ENCODE measurements at regions of chr7 and their contacts with region 1.

Region 1: DNA sequence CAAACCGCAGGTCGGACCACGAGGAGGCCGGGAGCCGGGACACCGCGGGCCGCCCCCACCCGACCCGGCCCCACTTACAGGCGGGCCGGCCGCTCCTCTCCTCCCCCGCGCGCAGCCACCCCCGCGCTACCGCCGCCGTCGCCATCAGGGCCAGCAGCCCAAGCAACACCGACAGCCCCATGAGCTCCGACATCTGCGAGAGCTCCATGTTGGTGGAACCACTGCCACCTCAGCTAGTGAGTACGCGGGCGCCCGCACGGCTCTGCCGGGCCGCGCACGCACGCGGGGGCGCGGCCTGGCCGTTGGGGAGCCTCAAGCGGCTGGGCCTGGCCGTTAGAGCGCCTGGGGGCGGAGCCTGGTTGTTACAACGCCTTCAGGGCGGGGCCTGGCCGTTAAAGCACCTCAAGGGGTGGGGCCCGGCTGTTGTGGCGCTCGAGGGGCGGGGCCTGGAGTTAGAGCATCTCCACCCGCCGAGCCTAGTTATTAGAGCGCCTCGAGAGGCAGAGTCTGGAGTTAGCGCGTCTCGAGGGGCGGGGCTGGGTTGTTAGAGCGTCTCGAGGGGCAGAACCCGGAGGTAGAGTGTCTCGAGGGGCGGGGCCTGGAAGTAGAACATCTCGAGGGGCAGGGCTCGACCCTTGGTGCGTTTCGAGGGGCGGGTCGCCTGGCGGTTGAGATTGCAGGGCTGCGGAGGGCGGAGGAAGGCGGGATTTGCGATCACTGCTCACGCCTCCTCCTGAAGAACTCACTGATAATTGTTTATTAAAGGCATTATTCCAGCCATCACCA is at the start of gene TBL2:
- DNase-seq: peak; percentile 99
- ATAC-seq: peak; percentile 88
- H3K4me3 ChIP-seq: peak within 1 kb of the TSS; percentile 61 to 90 (median 81)
- H3K4me3 Mint-ChIP-seq: peak within 1 kb of the TSS; percentile 94
- H3K27ac ChIP-seq: peak within 1 kb of the TSS; percentile 90 to 93
- H3K27ac Mint-ChIP-seq: peak within 1 kb of the TSS; percentile 94
- H3K4me1 ChIP-seq: peaks cover 11 to 21% of the 10 kb centered on the region in 2 donors
- H3K4me1 Mint-ChIP-seq: peaks cover 20% of the 10 kb centered on the region
- H3K27me3 ChIP-seq: no peaks in the 10 kb centered on the region
- H3K27me3 Mint-ChIP-seq: no peaks in the 10 kb centered on the region
- CTCF ChIP-seq: no peak
- total RNA-seq, gene TBL2: 34.6 and 34.7 TPM in 2 replicates

Region 2: DNA sequence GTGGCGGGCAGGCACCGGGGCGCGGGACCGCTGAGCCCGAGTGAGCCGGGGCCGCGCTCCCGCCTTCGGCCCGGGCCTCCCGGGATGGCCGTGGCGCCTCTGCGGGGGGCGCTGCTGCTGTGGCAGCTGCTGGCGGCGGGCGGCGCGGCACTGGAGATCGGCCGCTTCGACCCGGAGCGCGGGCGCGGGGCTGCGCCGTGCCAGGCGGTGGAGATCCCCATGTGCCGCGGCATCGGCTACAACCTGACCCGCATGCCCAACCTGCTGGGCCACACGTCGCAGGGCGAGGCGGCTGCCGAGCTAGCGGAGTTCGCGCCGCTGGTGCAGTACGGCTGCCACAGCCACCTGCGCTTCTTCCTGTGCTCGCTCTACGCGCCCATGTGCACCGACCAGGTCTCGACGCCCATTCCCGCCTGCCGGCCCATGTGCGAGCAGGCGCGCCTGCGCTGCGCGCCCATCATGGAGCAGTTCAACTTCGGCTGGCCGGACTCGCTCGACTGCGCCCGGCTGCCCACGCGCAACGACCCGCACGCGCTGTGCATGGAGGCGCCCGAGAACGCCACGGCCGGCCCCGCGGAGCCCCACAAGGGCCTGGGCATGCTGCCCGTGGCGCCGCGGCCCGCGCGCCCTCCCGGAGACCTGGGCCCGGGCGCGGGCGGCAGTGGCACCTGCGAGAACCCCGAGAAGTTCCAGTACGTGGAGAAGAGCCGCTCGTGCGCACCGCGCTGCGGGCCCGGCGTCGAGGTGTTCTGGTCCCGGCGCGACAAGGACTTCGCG is 144.4 kb before region 1 on chr7:
- CTCF ChIA-PET with region 1: no interaction called
- POLR2A ChIA-PET with region 1: no interaction called
- intact Hi-C with region 1: loop called (anchors 1 kb)
- DNase-seq: no peak
- ATAC-seq: peak; percentile 46
- H3K4me3 ChIP-seq: peak overlapping the region in 4 of 5 experiments; percentile 17 to 53 (median 43)
- H3K4me3 Mint-ChIP-seq: peak overlapping the region; percentile 80
- H3K27ac ChIP-seq: no peak overlapping the region
- H3K27ac Mint-ChIP-seq: no peak overlapping the region
- H3K4me1 ChIP-seq: peaks cover 0 to 9% of the 10 kb centered on the region in 2 donors
- H3K4me1 Mint-ChIP-seq: peaks cover 8% of the 10 kb centered on the region
- H3K27me3 ChIP-seq: peaks cover 0 to 5% (median 0%) of the 10 kb centered on the region in 4 experiments
- H3K27me3 Mint-ChIP-seq: peaks cover 5% of the 10 kb centered on the region
- CTCF ChIP-seq: no peak

Region 3: GRCh38 chr7:73522105-73522872 is 56.2 kb before region 1 on chr7 and contains the start of gene BAZ1B:
- CTCF ChIA-PET with region 1: interaction called, 4 read pairs
- POLR2A ChIA-PET with region 1: interaction called, 10 read pairs
- intact Hi-C with region 1: loop called (anchors 1 kb)
- DNase-seq: peak; percentile 98
- ATAC-seq: peak; percentile 91
- H3K4me3 ChIP-seq: peak within 1 kb of the TSS; percentile 50 to 78 (median 68)
- H3K4me3 Mint-ChIP-seq: peak within 1 kb of the TSS; percentile 95
- H3K27ac ChIP-seq: peak within 1 kb of the TSS; percentile 82 to 87
- H3K27ac Mint-ChIP-seq: peak within 1 kb of the TSS; percentile 98
- H3K4me1 ChIP-seq: peaks cover 58 to 63% of the 10 kb centered on the region in 2 donors
- H3K4me1 Mint-ChIP-seq: peaks cover 60% of the 10 kb centered on the region
- H3K27me3 ChIP-seq: no peaks in the 10 kb centered on the region
- H3K27me3 Mint-ChIP-seq: no peaks in the 10 kb centered on the region
- CTCF ChIP-seq: no peak
- total RNA-seq, gene BAZ1B: 67.0 and 68.1 TPM in 2 replicates

Region 4: DNA sequence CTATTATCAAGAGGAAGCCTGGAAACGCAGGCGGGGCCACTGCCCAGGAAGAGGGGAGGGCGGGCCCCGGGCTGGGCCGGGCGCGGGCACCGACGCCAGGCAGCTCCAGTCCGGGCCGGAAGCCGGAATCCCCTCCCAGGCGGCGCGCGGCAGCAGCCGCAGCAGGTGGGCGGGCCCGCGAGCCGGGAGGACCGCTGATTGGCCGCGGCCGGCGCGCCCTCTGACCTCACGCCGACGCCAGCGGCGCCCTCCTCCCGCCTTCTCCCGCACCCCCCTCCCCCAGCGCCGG is 21.5 kb before region 1 on chr7:
- CTCF ChIA-PET with region 1: interaction called, 4 read pairs
- POLR2A ChIA-PET with region 1: interaction called, 4 read pairs
- intact Hi-C with region 1: loop called (anchors 1 kb)
- DNase-seq: no peak
- ATAC-seq: peak; percentile 89
- H3K4me3 ChIP-seq: peak overlapping the region; percentile 69 to 86 (median 82)
- H3K4me3 Mint-ChIP-seq: peak overlapping the region; percentile 92
- H3K27ac ChIP-seq: peak overlapping the region; percentile 92 to 99
- H3K27ac Mint-ChIP-seq: peak overlapping the region; percentile 93
- H3K4me1 ChIP-seq: peaks cover 14 to 21% of the 10 kb centered on the region in 2 donors
- H3K4me1 Mint-ChIP-seq: peaks cover 30% of the 10 kb centered on the region
- H3K27me3 ChIP-seq: no peaks in the 10 kb centered on the region
- H3K27me3 Mint-ChIP-seq: no peaks in the 10 kb centered on the region
- CTCF ChIP-seq: no peak

Region 5: GRCh38 chr7:73667344-73668102 is 89.0 kb after region 1 on chr7 and contains the start of gene VPS37D:
- CTCF ChIA-PET with region 1: interaction called, 5 read pairs
- POLR2A ChIA-PET with region 1: no interaction called
- intact Hi-C with region 1: loop called (anchors 1 kb)
- DNase-seq: peak; percentile 94
- ATAC-seq: peak; percentile 94
- H3K4me3 ChIP-seq: peak within 1 kb of the TSS in 4 of 5 experiments; percentile 39 to 59 (median 48)
- H3K4me3 Mint-ChIP-seq: peak within 1 kb of the TSS; percentile 83
- H3K27ac ChIP-seq: no peak within 1 kb of the TSS
- H3K27ac Mint-ChIP-seq: peak within 1 kb of the TSS; percentile 20
- H3K4me1 ChIP-seq: peaks cover 8 to 16% of the 10 kb centered on the region in 2 donors
- H3K4me1 Mint-ChIP-seq: peaks cover 8% of the 10 kb centered on the region
- H3K27me3 ChIP-seq: peaks cover 0 to 55% (median 21%) of the 10 kb centered on the region in 4 experiments
- H3K27me3 Mint-ChIP-seq: peaks cover 42% of the 10 kb centered on the region
- CTCF ChIP-seq: peak; percentile 73
- total RNA-seq, gene VPS37D: 0.71 and 0.78 TPM in 2 replicates

Region 6: GRCh38 chr7:73683056-73683964 is 104.8 kb after region 1 on chr7 and contains the starts of genes BUD23 and DNAJC30:
- CTCF ChIA-PET with region 1: no interaction called
- POLR2A ChIA-PET with region 1: no interaction called
- intact Hi-C with region 1: loop called (anchors 1 kb)
- DNase-seq: peak; percentile 96
- ATAC-seq: peak; percentile 97
- H3K4me3 ChIP-seq: peak within 1 kb of the TSS; percentile 79 to 99 (median 95)
- H3K4me3 Mint-ChIP-seq: peak within 1 kb of the TSS; percentile 97
- H3K27ac ChIP-seq: peak within 1 kb of the TSS; percentile 81 to 90
- H3K27ac Mint-ChIP-seq: peak within 1 kb of the TSS; percentile 96
- H3K4me1 ChIP-seq: peaks cover 19 to 25% of the 10 kb centered on the region in 2 donors
- H3K4me1 Mint-ChIP-seq: peaks cover 32% of the 10 kb centered on the region
- H3K27me3 ChIP-seq: no peaks in the 10 kb centered on the region
- H3K27me3 Mint-ChIP-seq: no peaks in the 10 kb centered on the region
- CTCF ChIP-seq: no peak
- total RNA-seq, gene BUD23: 55.9 and 63.9 TPM in 2 replicates
- total RNA-seq, gene DNAJC30: 15.5 and 17.5 TPM in 2 replicates

Region 7: DNA sequence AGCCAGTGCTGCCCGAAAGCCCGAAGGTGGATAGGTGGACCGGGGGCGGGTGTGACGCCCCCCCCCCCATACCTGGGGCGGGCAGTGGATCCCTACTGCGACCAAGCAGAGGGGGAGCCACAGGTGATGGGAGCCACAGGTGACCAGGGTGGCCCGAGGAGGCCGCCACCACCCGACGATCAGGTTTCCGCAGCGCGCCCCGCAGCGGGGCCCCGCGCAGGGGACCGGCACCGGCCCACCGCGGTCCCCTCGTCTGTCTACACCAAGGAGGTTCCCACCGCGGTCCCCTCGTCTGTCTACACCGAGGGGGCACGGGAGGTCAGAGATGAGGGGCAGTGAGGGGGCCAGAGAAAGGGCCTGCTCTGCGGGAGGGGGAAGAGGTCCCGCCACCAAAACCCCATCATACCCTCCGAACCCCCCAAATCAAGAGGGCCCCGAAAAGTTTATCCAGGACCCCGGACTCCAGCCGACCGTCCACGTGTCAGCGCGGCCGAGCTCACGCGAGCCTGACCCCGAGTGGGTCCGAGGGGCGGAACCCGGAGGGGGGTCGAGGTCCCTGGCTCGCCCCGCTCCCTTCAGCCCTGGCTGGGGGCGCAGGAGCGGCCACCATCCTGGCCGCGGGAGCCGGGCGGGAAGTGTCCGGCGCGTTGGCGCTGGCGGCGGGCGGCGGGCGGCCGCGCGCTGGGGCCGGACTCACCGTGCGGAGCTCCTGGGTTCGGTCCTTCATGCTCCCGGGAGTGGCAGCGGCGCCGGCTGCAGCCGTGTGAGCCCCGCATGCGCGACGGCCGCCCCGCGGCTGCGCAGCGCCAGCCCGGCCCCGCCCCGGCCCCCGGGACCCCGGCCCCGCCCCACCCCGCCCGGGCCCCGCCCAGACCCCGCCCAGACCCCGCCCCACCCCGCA is 140.6 kb after region 1 on chr7 and contains the start of gene STX1A:
- CTCF ChIA-PET with region 1: no interaction called
- POLR2A ChIA-PET with region 1: no interaction called
- intact Hi-C with region 1: loop called (anchors 1 kb)
- DNase-seq: peak; percentile 82
- ATAC-seq: peak; percentile 89
- H3K4me3 ChIP-seq: peak within 1 kb of the TSS; percentile 15 to 70 (median 59)
- H3K4me3 Mint-ChIP-seq: peak within 1 kb of the TSS; percentile 83
- H3K27ac ChIP-seq: no peak within 1 kb of the TSS
- H3K27ac Mint-ChIP-seq: peak within 1 kb of the TSS; percentile 37
- H3K4me1 ChIP-seq: peaks cover 25 to 31% of the 10 kb centered on the region in 2 donors
- H3K4me1 Mint-ChIP-seq: peaks cover 20% of the 10 kb centered on the region
- H3K27me3 ChIP-seq: peaks cover 0 to 57% (median 25%) of the 10 kb centered on the region in 4 experiments
- H3K27me3 Mint-ChIP-seq: peaks cover 27% of the 10 kb centered on the region
- CTCF ChIP-seq: no peak
- total RNA-seq, gene STX1A: 3.0 and 3.1 TPM in 2 replicates